Colonic mucosa (tissue), 4 donors: ENCODE measurements at regions of chr1 and their contacts with region 1.

Region 1: GRCh38 chr1:92994105-92994712 is 32.9 kb upstream of the DIPK1A start:
- DNase-seq: peak; percentile 86
- H3K4me3 ChIP-seq: no peak overlapping the region
- H3K27ac ChIP-seq: no peak overlapping the region
- H3K4me1 ChIP-seq: no peaks in the 10 kb centered on the region
- H3K27me3 ChIP-seq: no peaks in the 10 kb centered on the region
- CTCF ChIP-seq: peak; percentile 86

Region 2: DNA sequence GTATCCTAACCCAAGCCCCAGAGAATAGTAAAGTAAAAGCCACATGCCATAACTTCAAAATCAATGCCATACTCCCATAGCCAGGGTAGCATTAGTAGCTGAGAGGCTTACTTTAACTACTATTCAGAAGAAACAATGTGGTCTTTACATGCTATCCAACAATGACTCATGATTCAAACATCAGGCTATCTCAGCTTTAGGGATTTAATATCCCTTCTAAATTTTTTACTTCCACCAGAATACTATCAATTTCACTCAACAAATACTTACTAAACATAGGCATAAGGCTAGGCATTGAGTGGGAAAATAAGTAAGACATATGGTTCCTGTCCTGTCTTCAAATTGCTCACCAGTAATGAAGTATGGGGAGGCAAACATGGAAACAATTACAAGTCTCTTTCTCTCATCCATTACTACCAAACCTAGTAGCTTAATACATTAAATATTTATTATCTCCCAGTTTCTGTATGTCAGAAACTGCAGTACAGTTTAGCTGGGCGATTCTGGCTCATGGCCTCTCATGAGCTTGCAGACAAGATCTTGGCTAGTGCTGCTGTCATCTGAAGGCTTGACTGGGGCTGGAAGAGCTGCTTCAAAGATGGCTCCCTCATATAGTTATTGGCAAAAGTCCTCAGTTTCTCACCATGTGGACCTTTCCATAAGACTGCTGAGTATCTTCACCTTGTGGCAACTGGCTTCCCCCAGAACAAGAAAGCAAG is 240.1 kb before region 1 on chr1:
- intact Hi-C with region 1: no loop called
- DNase-seq: no peak
- H3K4me3 ChIP-seq: no peak overlapping the region
- H3K27ac ChIP-seq: no peak overlapping the region
- H3K4me1 ChIP-seq: no peaks in the 10 kb centered on the region
- H3K27me3 ChIP-seq: no peaks in the 10 kb centered on the region
- CTCF ChIP-seq: no peak

Region 3: GRCh38 chr1:92858564-92859399 is 135.4 kb before region 1 on chr1:
- intact Hi-C with region 1: loop called (anchors 2 kb)
- DNase-seq: peak; percentile 82
- H3K4me3 ChIP-seq: peak overlapping the region; percentile 11
- H3K27ac ChIP-seq: no peak overlapping the region
- H3K4me1 ChIP-seq: no peaks in the 10 kb centered on the region
- H3K27me3 ChIP-seq: no peaks in the 10 kb centered on the region
- CTCF ChIP-seq: peak; percentile 92

Region 4: GRCh38 chr1:92968138-92969032 is 25.8 kb before region 1 on chr1:
- intact Hi-C with region 1: loop called (anchors 2 kb)
- DNase-seq: no peak
- H3K4me3 ChIP-seq: no peak overlapping the region
- H3K27ac ChIP-seq: no peak overlapping the region
- H3K4me1 ChIP-seq: no peaks in the 10 kb centered on the region
- H3K27me3 ChIP-seq: no peaks in the 10 kb centered on the region
- CTCF ChIP-seq: peak; percentile 51